H1 (cell line): ENCODE measurements at regions of chr5 and their contacts with region 1.

Region 1: DNA sequence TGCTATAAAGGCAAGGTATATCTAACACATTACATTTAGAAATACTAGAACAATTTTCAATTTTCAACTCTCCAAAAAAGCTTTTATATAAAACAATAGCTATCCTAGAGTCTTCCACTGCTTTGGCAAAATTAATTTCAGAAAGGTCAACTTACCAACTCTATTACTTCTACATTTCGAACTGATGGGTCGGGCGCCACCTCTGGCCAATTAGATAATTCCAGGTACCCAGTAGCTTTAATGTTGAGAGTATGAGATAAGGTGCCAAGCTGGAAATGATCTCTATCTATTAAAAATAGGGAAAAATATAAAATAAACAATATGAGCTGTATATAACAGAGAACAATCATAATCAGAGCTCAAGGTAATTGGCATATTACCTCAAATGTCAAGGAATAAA is 166.6 kb downstream of the AP3B1 start:
- DNase-seq: peak in 1 of 2 experiments; percentile 59
- H3K4me3 ChIP-seq: no peak overlapping the region
- H3K27ac ChIP-seq: no peak overlapping the region
- H3K4me1 ChIP-seq: no peaks in the 10 kb centered on the region
- H3K27me3 ChIP-seq: no peaks in the 10 kb centered on the region
- CTCF ChIP-seq: peak in 2 of 3 experiments; percentile 50 to 52; a peak in 3 of 4 replicates
- EP300 ChIP-seq: no peak
- POLR2A ChIP-seq: no peak
- RAD21 ChIP-seq: peak; percentile 38 to 45

Region 2: DNA sequence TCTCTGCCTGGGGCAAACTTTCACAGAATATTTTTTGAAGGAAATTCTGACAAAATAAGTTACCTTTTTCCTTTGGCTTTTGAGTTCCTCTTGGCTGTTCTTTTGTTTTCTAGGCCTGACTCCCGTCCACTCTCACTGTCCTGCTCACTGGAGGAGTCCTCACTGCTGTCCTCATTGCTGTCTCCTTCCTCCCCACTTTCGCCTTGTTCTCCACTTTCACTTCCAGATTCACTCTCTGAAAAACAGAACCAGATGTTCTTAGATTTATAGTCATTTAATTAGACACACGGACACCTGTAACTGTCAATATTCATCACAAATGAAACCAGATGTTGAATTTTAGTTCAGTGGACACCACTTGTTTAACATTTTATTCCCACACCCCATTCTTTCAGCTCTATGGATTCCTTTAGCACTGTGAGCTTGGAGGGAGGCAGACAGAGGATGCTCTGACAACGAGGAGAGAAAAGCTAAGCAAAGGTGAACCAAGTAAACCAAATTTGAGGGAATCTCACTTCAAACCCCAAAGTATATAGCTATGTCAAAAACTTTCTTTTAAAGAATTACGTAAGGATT is 14.1 kb before region 1 on chr5:
- CTCF ChIA-PET with region 1: interaction called, 11 read pairs
- POLR2A ChIA-PET with region 1: no interaction called
- DNase-seq: no peak
- H3K4me3 ChIP-seq: no peak overlapping the region
- H3K27ac ChIP-seq: no peak overlapping the region
- H3K4me1 ChIP-seq: no peaks in the 10 kb centered on the region
- H3K27me3 ChIP-seq: no peaks in the 10 kb centered on the region
- CTCF ChIP-seq: no peak
- EP300 ChIP-seq: no peak
- POLR2A ChIP-seq: no peak
- RAD21 ChIP-seq: no peak